ENCODE measurements at regions of chr20 and their contacts with region 1.

Region 1: DNA sequence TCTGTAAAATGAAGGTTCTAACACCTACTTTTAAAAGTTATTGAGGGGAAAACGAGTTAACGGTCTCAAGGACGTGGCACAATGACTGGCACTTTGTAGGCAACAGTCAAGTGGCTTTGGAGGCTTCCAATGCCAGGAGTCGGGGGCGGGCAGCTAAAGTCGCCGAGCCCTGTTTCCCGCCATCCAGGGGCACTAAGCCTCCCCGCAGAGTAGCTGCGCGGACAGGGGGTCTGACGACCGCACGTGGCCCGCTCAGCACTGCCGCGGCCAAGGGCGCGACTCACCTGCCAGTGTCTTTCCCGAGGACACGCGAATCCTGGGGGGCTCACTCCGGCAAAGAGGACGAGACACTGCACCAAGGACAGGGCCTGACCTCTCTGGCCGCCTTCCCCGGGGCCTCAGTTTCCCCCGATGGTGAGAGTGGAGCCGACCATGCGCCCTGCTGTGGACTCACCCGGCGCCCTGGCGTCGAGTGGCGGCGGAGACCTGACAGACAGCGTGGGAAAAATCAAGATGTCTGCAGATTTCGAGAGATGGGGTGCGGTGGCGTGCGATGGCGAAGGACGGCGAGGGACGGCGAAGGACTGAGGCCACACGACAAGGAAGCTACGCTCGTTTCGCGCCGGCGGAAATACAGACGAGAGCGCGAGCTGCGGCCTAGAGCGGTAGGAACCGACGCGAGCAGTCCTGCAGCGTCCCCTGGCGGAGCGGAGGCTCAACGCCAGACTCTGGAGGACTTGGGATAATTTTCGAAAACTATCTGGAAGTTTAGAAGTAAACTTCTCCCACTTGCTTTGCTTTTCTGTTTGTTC is at the start of gene SNHG17:
- DNase-seq: peak; percentile 92
- H3K4me3 Mint-ChIP-seq: peak within 1 kb of the TSS; percentile 97
- H3K27ac Mint-ChIP-seq: peak within 1 kb of the TSS; percentile 97
- H3K4me1 Mint-ChIP-seq: peaks cover 34% of the 10 kb centered on the region
- H3K27me3 Mint-ChIP-seq: peaks cover 6% of the 10 kb centered on the region
- total RNA-seq, gene SNHG17: 55.4 to 55.6 TPM

Region 2: GRCh38 chr20:38446441-38447209 is 11.7 kb after region 1 on chr20:
- CTCF ChIA-PET with region 1: interaction called, 141 read pairs
- POLR2A ChIA-PET with region 1: interaction called, 100 read pairs
- intact Hi-C with region 1: loop called (anchors 1 kb)
- DNase-seq: peak; percentile 95
- H3K4me3 Mint-ChIP-seq: peak overlapping the region; percentile 76
- H3K27ac Mint-ChIP-seq: peak overlapping the region; percentile 80
- H3K4me1 Mint-ChIP-seq: peaks cover 30% of the 10 kb centered on the region
- H3K27me3 Mint-ChIP-seq: no peaks in the 10 kb centered on the region

Measured in activated CD4-positive, alpha-beta memory T cell treated with anti-CD3 and anti-CD28 coated beads for 36 hours (primary cell).